ENCODE measurements at regions of chr9 and their contacts with region 1.

Region 1: GRCh38 chr9:76441551-76442322 is 17.2 kb upstream of the GCNT1 start:
- DNase-seq: peak; percentile 72
- H3K4me3 Mint-ChIP-seq: peak overlapping the region; percentile 77
- H3K27ac Mint-ChIP-seq: peak overlapping the region; percentile 97
- H3K4me1 Mint-ChIP-seq: peaks cover 50% of the 10 kb centered on the region
- H3K27me3 Mint-ChIP-seq: peaks cover 1% of the 10 kb centered on the region

Region 2: DNA sequence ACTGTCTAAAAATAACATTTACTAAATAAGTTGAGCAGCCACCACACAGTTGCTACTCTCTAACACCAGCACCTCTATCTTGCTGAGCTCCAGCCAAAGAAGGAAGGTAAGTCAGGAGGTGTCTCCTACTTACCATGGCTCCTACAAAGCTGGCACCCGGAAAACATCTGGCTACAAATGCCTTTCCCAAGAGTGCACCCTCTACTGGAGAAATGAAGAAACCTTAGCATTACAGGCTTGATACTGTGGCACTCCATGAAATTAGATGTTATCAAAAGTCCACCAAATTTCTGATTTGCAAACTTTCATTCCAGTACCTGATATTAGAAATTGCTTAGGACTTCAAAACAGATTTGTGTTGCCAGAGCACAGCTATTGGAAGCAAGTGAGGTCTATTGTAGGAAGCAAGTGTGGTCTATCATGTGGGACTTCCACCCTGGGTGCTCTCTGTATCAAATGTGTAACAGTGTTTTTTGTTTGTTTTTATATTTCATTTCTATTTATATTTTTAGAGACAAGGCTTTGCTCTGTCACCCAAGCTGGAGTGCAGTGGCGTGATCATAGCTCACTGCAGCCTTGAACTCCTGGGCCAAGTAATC is 21.9 kb before region 1 on chr9:
- CTCF ChIA-PET with region 1: interaction called, 9 read pairs
- POLR2A ChIA-PET with region 1: interaction called, 5 read pairs
- intact Hi-C with region 1: loop called (anchors 1 kb)
- DNase-seq: no peak
- H3K4me3 Mint-ChIP-seq: no peak overlapping the region
- H3K27ac Mint-ChIP-seq: no peak overlapping the region
- H3K4me1 Mint-ChIP-seq: peaks cover 34% of the 10 kb centered on the region
- H3K27me3 Mint-ChIP-seq: no peaks in the 10 kb centered on the region

Region 3: DNA sequence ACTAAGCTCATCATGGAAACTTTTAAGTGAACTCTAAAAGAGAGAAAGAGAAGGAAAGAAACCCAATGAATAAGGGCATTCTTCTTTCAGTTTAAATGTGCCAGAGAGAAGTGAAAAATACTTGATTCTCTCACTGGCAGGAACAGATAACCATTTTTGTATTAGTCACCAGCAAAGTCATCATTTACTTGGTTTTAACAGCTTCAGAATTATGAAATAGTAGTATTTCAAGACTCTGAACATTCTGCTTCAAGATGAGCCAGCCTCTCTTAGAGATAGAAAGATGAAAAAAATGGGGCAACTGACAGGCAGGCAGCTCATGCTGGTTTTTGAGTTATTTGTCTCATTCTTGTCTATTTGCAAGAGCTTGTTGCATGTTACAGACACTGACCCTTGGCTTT is 120.8 kb after region 1 on chr9:
- CTCF ChIA-PET with region 1: interaction called, 3 read pairs
- POLR2A ChIA-PET with region 1: interaction called, 5 read pairs
- intact Hi-C with region 1: loop called (anchors 1 kb)
- DNase-seq: no peak
- H3K4me3 Mint-ChIP-seq: no peak overlapping the region
- H3K27ac Mint-ChIP-seq: peak overlapping the region; percentile 61
- H3K4me1 Mint-ChIP-seq: peaks cover 22% of the 10 kb centered on the region
- H3K27me3 Mint-ChIP-seq: peaks cover 1% of the 10 kb centered on the region

Region 4: GRCh38 chr9:76658535-76659231 is 216.9 kb after region 1 on chr9:
- CTCF ChIA-PET with region 1: interaction called, 37 read pairs
- POLR2A ChIA-PET with region 1: no interaction called
- intact Hi-C with region 1: no loop called
- DNase-seq: no peak
- H3K4me3 Mint-ChIP-seq: no peak overlapping the region
- H3K27ac Mint-ChIP-seq: no peak overlapping the region
- H3K4me1 Mint-ChIP-seq: peaks cover 29% of the 10 kb centered on the region
- H3K27me3 Mint-ChIP-seq: peaks cover 1% of the 10 kb centered on the region

Region 5: DNA sequence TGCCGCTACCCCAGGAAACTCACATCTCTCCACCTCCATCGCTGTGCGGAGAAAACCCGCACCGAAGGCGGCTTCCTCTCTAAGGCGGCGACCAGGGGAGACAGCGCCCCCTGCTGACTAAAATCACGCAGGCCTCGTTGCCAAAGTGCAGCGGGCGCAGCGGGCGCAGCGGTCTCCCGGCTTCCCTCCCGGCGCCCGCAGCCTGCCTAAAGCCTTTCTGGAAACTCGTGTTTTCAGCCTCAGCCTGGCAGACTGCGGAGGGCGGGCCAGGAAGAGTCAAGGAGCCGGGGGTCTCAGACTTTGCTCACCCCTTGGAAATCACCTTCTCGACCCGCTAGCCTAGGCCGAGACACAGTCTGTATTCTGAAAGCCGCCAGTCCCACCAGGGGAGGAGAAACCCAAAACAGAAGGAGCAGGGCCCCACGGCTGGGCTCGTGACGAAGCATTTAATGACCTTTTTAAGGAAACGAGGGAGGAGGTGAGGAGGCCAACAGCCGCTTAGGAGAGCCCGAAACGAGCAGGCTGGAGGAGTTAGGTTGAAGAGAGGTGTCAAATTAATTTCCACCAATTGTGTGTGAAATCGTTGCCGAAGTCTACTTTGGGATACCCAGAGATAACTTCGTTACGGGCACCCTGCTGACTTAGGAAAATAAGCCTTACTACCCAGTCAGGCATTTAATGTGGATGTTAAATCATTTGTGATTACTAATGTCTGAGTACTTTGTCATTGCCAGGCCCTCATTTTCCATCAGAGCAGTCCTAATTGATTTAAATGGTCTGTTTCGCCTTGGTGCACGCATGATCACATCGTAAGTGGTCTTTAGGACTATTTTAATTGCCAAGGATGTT is 570.5 kb after region 1 on chr9:
- CTCF ChIA-PET with region 1: no interaction called
- POLR2A ChIA-PET with region 1: no interaction called
- intact Hi-C with region 1: loop called (anchors 5 kb)
- DNase-seq: peak; percentile 79
- H3K4me3 Mint-ChIP-seq: peak overlapping the region; percentile 10
- H3K27ac Mint-ChIP-seq: no peak overlapping the region
- H3K4me1 Mint-ChIP-seq: peaks cover 4% of the 10 kb centered on the region
- H3K27me3 Mint-ChIP-seq: peaks cover 61% of the 10 kb centered on the region